ENCODE measurements at regions of chr22 and their contacts with region 1.

Region 1: GRCh38 chr22:46006379-46007002 is 29.5 kb upstream of the WNT7B start:
- DNase-seq: peak in 1 of 2 donors; percentile 96
- H3K4me3 ChIP-seq: peak overlapping the region; percentile 6 to 18
- H3K27ac ChIP-seq: peak overlapping the region; percentile 97
- H3K4me1 ChIP-seq: peaks cover 58% of the 10 kb centered on the region
- H3K27me3 ChIP-seq: no peaks in the 10 kb centered on the region
- CTCF ChIP-seq: peak; percentile 96 to 98 (median 97)
- POLR2A ChIP-seq: no peak

Region 2: DNA sequence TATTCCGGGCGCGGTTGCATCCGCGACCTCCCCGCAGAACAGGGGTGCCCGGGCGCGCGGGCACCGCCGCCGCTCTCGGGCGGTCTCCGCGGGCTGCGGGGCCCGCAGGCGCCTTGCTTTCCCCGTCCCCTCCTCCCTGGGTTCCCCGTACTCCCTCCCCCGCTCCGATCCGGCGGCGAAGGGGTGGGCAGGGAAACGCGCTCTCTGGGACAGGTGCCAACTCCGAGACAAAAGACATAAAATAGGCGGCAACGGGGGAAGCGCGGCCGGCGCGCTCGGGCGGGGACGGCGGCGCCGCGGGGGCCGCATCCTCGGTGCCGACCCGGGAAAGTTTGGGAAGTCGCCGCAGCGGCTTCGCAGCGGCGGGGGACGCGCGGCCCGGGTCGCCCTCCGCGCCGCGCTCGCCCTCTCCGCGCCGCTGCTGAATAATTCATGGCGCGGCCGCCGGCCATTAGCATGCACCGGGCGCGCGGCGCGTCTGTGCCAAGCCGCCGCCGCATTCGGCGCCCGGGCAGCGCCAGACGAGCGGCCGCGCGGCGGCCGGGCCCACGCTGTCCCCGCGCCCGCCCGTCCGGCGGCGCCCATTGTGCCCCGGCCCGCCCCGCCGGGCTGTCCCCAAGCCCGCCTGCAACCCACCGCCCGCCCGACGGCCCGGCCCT is 65.1 kb after region 1 on chr22:
- intact Hi-C with region 1: loop called (anchors 10 kb)
- DNase-seq: no peak
- H3K4me3 ChIP-seq: peak overlapping the region; percentile 82 to 95
- H3K27ac ChIP-seq: peak overlapping the region; percentile 100
- H3K4me1 ChIP-seq: peaks cover 48% of the 10 kb centered on the region
- H3K27me3 ChIP-seq: no peaks in the 10 kb centered on the region
- CTCF ChIP-seq: no peak
- POLR2A ChIP-seq: peak in 1 of 2 donors; percentile 61

Region 3: GRCh38 chr22:46116491-46116958 is 110.0 kb after region 1 on chr22:
- intact Hi-C with region 1: loop called (anchors 1 kb)
- DNase-seq: no peak
- H3K4me3 ChIP-seq: no peak overlapping the region
- H3K27ac ChIP-seq: peak overlapping the region; percentile 80
- H3K4me1 ChIP-seq: peaks cover 68% of the 10 kb centered on the region
- H3K27me3 ChIP-seq: no peaks in the 10 kb centered on the region
- CTCF ChIP-seq: peak; percentile 63 to 96 (median 94)
- POLR2A ChIP-seq: no peak

Region 4: GRCh38 chr22:46139895-46140350 is 133.4 kb after region 1 on chr22:
- intact Hi-C with region 1: no loop called
- DNase-seq: no peak
- H3K4me3 ChIP-seq: no peak overlapping the region
- H3K27ac ChIP-seq: peak overlapping the region; percentile 80
- H3K4me1 ChIP-seq: peaks cover 7% of the 10 kb centered on the region
- H3K27me3 ChIP-seq: no peaks in the 10 kb centered on the region
- CTCF ChIP-seq: no peak
- POLR2A ChIP-seq: no peak

Measured in vagina (tissue), 2 donors.